Activated CD4-positive, alpha-beta memory T cell treated with anti-CD3 and anti-CD28 coated beads, Interleukin-2, amount 10 ng/mL, durations not matched to agents 7 days and 5 days (primary cell): ENCODE measurements at regions of chr3 and their contacts with region 1.

Region 1: DNA sequence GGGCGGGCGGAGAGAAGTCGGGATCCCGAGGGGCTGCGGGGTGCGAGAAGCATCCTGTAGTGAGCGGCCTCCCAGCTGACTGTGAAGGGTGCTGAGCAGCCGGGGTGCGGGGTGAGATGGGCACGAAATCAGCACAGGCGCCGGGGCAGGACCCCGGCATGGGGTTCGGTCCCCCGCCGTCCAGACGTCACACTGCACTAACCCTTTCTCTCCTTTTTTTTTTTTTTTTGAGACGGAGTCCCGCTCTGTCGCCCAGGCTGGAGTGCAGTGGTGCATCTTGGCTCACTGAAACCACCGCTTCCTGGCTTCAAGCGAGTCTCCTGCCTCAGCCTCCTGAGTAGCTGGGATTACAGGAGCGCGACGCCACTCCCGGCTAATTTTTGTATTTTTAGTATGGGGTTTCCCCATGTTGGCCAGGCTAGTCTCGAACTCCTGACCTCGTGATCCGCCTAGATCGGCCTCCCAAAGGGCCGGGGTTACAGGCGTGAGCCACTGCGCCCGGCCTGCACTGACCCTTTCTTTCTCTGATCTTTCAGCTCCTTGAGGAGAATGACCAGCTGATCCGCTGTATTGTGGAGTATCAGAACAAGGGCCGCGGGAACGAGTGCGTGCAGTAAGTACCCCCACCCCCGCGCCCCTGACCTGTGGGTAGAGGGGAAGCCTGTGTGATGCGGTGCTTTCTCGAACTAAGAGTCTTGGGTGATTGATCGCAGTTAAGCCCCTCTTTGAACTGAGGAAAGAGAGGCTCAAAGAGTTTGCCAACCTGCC is 513 bp downstream of the SS18L2 start:
- DNase-seq: peak; percentile 33
- H3K4me3 Mint-ChIP-seq: peak overlapping the region; percentile 88
- H3K27ac Mint-ChIP-seq: peak overlapping the region; percentile 92
- H3K4me1 Mint-ChIP-seq: peaks cover 58% of the 10 kb centered on the region
- H3K27me3 Mint-ChIP-seq: no peaks in the 10 kb centered on the region

Region 2: GRCh38 chr3:42179110-42179725 is 412.0 kb before region 1 on chr3:
- CTCF ChIA-PET with region 1: no interaction called
- POLR2A ChIA-PET with region 1: no interaction called
- DNase-seq: no peak
- H3K4me3 Mint-ChIP-seq: no peak overlapping the region
- H3K27ac Mint-ChIP-seq: no peak overlapping the region
- H3K4me1 Mint-ChIP-seq: peaks cover 4% of the 10 kb centered on the region
- H3K27me3 Mint-ChIP-seq: no peaks in the 10 kb centered on the region

Region 3: DNA sequence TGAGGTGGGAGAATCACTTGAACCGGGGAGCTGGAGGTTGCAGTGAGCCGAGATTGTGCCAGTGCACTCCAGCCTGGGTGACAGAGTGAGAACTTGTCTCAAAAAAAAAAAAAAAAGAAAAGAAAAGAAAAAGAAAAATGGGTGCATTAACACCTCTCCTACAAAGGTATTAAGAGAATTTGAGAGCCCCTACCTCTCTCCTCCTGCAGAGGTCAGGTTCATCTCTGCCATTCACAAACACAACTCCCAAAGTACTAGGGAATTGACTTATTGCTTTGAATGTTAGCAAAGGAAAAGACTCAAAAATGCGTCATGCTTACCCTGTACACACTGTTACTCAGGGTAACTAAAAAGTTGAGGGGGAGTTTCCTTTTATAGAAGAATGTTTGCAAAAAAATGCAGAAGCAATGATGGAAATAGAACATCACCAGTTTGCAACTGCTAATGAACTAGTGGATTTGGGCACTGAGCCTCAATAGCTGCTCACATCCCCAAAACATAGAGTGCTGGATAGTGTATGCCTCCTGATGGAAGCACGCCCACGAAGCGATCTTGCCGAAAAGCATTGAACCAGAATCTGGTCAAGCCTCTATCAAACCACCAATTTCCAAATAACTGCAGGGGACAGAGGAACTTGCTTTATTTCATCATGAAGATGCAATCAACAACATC is 165.3 kb before region 1 on chr3:
- CTCF ChIA-PET with region 1: no interaction called
- POLR2A ChIA-PET with region 1: no interaction called
- DNase-seq: no peak
- H3K4me3 Mint-ChIP-seq: no peak overlapping the region
- H3K27ac Mint-ChIP-seq: no peak overlapping the region
- H3K4me1 Mint-ChIP-seq: no peaks in the 10 kb centered on the region
- H3K27me3 Mint-ChIP-seq: peaks cover 11% of the 10 kb centered on the region

Region 4: DNA sequence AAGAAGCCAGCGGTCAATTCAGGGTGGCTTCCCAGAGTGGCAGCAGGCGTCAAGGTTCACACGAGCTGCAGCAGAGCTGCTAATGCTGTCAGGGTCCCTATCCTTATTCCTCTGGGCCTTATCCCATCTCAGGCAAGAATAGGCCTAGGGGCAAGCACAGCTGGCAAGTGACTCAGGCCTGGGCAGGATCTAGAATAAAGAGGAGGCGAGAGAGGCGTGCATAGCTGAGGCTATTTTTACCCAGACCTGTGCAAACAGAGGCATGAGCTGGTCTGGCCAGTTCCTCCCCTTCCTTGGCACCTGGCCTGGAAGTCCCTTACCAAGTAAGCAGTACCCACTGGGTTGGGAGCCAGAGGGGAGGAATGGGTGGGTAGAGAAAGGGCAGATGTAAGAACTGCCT is 100.9 kb before region 1 on chr3:
- CTCF ChIA-PET with region 1: no interaction called
- POLR2A ChIA-PET with region 1: no interaction called
- DNase-seq: peak; percentile 9
- H3K4me3 Mint-ChIP-seq: no peak overlapping the region
- H3K27ac Mint-ChIP-seq: no peak overlapping the region
- H3K4me1 Mint-ChIP-seq: no peaks in the 10 kb centered on the region
- H3K27me3 Mint-ChIP-seq: peaks cover 11% of the 10 kb centered on the region

Region 5: DNA sequence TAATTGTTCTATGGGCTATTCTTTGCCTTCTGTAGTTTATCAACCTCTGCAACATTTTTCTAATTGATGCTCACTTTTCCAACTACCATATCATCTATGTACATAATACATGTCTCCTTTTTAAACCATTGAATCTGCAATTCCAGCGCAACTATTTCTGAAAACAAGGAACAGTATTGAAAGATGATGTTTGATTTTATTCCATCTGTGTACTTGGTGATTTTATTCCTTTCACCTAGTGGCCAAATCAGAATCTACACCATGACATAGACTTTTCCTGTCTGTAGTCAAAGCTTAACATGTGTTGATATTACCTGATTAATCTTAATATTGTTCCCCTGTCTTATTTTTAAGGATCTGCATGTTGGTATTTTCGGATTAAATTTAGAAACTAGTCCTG is 22.3 kb after region 1 on chr3:
- CTCF ChIA-PET with region 1: interaction called, 7 read pairs
- POLR2A ChIA-PET with region 1: interaction called, 11 read pairs
- DNase-seq: no peak
- H3K4me3 Mint-ChIP-seq: no peak overlapping the region
- H3K27ac Mint-ChIP-seq: peak overlapping the region; percentile 0
- H3K4me1 Mint-ChIP-seq: peaks cover 52% of the 10 kb centered on the region
- H3K27me3 Mint-ChIP-seq: no peaks in the 10 kb centered on the region